B cell (primary cell): ENCODE measurements at regions of chr9 and their contacts with region 1.

Region 1: DNA sequence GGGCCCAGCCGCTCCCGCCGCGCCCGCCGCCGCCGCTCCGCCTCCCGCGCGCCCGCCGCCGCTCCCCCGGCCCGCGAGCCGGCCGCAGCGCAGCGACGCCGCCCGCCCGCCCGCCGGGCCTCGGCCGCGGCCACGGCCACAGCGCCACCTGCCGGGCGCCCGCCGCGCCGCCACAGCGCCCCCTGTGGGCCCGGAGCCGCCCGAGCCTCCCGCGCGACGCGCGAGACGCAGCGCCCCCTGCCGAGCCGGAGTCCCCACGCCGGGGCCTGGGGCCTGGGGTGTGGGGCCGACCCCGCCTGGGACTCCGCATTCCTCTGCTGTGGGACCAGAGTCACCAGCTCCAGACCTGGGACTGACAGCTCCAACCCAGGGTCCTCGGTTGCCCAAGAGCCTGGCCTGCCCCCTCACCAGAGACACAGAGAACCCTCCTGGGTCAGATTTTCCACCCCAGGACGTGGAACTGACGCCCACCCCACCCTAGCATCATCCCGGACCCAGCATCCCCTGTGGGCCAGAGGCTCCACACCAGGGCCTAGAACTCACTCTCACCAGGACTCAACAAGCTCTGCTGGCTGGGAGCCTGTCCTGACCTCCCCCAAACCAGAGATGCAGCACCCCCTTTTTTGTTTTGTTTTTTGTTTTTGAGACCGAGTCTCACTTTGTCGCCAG is at the start of gene RAPGEF1:
- DNase-seq: peak; percentile 87
- ATAC-seq: peak; percentile 75
- H3K4me3 ChIP-seq: peak within 1 kb of the TSS; percentile 72 to 83 (median 77)
- H3K4me3 Mint-ChIP-seq: peak within 1 kb of the TSS; percentile 97
- H3K27ac ChIP-seq: peak within 1 kb of the TSS; percentile 44 to 80
- H3K27ac Mint-ChIP-seq: peak within 1 kb of the TSS; percentile 93
- H3K4me1 ChIP-seq: peaks cover 53 to 62% of the 10 kb centered on the region in 2 donors
- H3K4me1 Mint-ChIP-seq: peaks cover 64% of the 10 kb centered on the region
- H3K27me3 ChIP-seq: no peaks in the 10 kb centered on the region
- H3K27me3 Mint-ChIP-seq: no peaks in the 10 kb centered on the region
- CTCF ChIP-seq: peak; percentile 80
- total RNA-seq, gene RAPGEF1: 439 and 447 TPM in 2 replicates

Region 2: DNA sequence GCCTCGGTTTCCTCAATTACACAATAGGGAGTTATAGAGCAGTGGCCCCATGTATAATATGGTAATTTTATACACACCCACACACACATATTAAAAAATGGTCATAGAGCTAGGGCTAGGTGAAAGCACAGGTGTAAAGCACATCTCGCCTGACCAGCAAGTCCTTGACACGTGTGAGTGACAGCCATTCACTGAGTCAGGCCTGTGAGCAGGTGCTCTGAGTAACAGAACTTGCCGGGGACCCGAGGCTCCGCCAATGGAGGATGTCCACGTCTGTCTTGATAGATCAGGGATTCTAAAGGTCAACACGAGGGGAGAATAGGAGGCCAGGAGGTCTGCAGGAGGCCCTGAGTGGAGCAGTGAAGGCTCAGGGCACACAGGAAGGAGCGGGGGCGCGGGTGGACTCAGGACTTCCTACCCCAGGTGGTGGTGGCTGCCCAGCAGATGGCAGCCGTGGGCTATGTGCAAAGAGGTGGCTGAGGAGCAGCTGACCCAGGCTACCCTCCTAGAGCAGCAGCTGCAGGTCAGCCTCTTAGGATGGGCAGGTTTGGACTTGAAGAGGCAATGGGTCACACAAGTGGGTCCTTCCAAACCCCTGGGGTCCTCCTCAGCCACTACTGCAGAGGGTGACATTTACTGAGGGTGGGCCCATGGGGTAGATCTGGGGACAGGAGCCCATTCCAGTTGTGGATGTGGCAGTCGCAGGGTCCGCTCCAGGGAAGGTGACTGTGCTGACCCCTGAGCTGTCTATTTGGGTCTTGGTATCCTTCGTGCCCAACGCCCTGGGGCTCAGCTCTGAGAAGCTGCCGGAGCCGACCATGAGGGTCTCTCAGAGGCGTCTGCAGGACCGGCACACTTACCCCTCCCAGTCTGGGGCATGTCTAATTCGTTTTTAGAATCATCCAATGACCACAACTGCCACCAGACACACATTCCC is 148.9 kb before region 1 on chr9:
- CTCF ChIA-PET with region 1: interaction called, 263 read pairs
- POLR2A ChIA-PET with region 1: interaction called, 3 read pairs
- intact Hi-C with region 1: loop called (anchors 1 kb)
- DNase-seq: peak; percentile 85
- ATAC-seq: peak; percentile 87
- H3K4me3 ChIP-seq: no peak overlapping the region
- H3K4me3 Mint-ChIP-seq: no peak overlapping the region
- H3K27ac ChIP-seq: no peak overlapping the region
- H3K27ac Mint-ChIP-seq: peak overlapping the region; percentile 82
- H3K4me1 ChIP-seq: peaks cover 0 to 13% of the 10 kb centered on the region in 2 donors
- H3K4me1 Mint-ChIP-seq: peaks cover 27% of the 10 kb centered on the region
- H3K27me3 ChIP-seq: no peaks in the 10 kb centered on the region
- H3K27me3 Mint-ChIP-seq: no peaks in the 10 kb centered on the region
- CTCF ChIP-seq: peak; percentile 83

Region 3: DNA sequence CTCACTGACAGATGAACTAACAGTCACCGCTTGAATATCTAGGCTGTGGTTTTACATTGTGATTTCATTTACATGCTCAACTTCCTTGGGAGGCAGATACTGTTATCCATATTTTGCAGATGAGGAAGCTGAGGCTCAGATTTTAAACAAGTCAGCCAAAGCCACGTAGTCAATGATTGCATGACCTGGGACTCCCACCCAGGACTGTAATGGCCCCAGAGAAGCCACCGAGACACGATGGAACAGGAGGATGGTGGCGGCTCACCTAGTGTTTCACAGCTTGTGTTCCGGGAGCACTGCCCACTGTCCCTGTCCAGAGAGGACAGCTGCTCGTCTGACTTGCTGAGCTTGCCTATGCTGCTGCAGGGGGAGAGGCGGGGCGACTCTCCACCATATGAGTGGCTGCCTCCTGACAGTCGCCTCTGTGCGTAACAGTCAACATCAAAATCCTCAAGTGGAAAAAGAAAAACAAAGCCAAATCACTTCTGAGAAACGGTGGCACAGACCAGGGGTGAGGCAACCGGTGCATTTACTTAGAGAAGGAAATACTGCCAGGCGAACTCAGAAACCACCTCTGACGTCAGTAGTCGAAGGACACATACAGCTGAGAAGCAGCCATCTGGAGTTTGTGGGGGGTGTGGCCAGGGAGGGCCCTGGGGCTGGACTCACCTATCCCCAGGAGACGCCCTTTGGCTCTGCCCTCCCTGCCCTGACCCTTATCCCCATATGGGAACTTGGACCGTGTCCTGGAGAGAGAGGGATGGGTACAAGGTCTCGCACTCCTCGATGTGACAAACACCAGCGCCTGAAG is 112.3 kb before region 1 on chr9:
- CTCF ChIA-PET with region 1: interaction called, 88 read pairs
- POLR2A ChIA-PET with region 1: interaction called, 5 read pairs
- intact Hi-C with region 1: no loop called
- DNase-seq: peak; percentile 84
- ATAC-seq: peak; percentile 79
- H3K4me3 ChIP-seq: no peak overlapping the region
- H3K4me3 Mint-ChIP-seq: peak overlapping the region; percentile 89
- H3K27ac ChIP-seq: peak overlapping the region; percentile 83 to 85
- H3K27ac Mint-ChIP-seq: peak overlapping the region; percentile 94
- H3K4me1 ChIP-seq: peaks cover 24 to 52% of the 10 kb centered on the region in 2 donors
- H3K4me1 Mint-ChIP-seq: peaks cover 65% of the 10 kb centered on the region
- H3K27me3 ChIP-seq: no peaks in the 10 kb centered on the region
- H3K27me3 Mint-ChIP-seq: no peaks in the 10 kb centered on the region
- CTCF ChIP-seq: no peak

Region 4: GRCh38 chr9:131678499-131679111 is 61.5 kb before region 1 on chr9:
- CTCF ChIA-PET with region 1: interaction called, 53 read pairs
- POLR2A ChIA-PET with region 1: interaction called, 11 read pairs
- intact Hi-C with region 1: loop called (anchors 2 kb)
- DNase-seq: peak; percentile 76
- ATAC-seq: peak; percentile 87
- H3K4me3 ChIP-seq: peak overlapping the region in 2 of 5 experiments; percentile 1 to 67
- H3K4me3 Mint-ChIP-seq: peak overlapping the region; percentile 99
- H3K27ac ChIP-seq: peak overlapping the region; percentile 88 to 96
- H3K27ac Mint-ChIP-seq: peak overlapping the region; percentile 94
- H3K4me1 ChIP-seq: peaks cover 74 to 79% of the 10 kb centered on the region in 2 donors
- H3K4me1 Mint-ChIP-seq: peaks cover 94% of the 10 kb centered on the region
- H3K27me3 ChIP-seq: no peaks in the 10 kb centered on the region
- H3K27me3 Mint-ChIP-seq: no peaks in the 10 kb centered on the region
- CTCF ChIP-seq: no peak